Motor neuron (in vitro differentiated cells): ENCODE measurements at regions of chr6 and their contacts with region 1.

Region 1: GRCh38 chr6:89432875-89433251 is at the start of gene ANKRD6:
- ATAC-seq: peak; percentile 87 to 97 (median 89)
- H3K4me3 ChIP-seq: peak within 1 kb of the TSS; percentile 79 to 98 (median 85)
- H3K27ac ChIP-seq: peak within 1 kb of the TSS in 1 of 2 donors; percentile 6
- H3K4me1 ChIP-seq: peaks cover 31 to 32% of the 10 kb centered on the region in 2 donors
- total RNA-seq, gene ANKRD6: 2.6 to 52.4 (median 33.7) TPM

Region 2: DNA sequence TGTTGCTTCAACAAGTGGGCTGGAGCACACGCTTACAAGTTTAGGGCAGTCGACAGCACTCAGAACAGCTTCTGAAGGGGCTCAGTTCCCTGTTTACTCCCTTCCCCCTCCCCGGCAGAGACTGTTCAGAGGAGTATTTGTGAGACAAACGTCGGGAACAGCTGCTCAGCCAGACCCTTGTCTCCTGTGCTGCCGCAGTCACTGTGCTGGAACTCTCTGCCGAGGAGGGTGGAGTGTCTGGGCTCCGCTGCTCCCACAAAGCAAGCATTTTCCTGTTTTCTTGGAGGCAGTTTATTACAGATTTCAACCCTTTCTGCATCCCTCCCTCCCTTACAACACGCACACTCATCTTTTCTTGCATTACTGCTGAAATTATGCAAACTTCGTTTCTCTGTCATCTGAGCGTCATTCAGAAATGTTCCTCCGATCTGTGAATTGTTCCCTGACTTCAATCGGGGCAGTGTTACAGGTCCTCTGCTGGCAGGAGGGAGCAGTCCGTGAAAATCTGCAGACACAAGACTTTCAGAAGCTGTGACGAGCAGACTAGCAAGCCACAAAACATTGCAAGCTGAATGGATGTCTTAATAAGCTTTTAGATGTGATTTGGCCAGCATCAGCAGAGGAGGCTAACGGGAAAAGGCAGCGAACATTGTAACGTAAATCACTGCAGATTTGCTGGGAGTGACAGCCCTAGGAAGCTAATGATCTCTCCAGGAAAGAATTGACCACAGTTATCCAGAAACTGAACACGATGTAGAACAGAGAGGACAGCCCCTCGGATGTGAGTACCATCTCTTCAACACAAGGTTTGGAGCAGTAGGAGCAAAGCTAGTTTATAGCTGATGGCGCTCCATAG is 129.5 kb after region 1 on chr6:
- in situ Hi-C with region 1: loop called in 2 of 9 experiments (anchors 25 kb)
- ATAC-seq: peak; percentile 59 to 82 (median 73)
- H3K4me3 ChIP-seq: peak overlapping the region; percentile 19 to 39 (median 34)
- H3K27ac ChIP-seq: peak overlapping the region; percentile 52 to 71
- H3K4me1 ChIP-seq: peaks cover 62 to 64% of the 10 kb centered on the region in 2 donors

Region 3: GRCh38 chr6:89597988-89598692 is 165.3 kb after region 1 on chr6:
- in situ Hi-C with region 1: loop called in 5 of 9 experiments (anchors 10 to 25 kb)
- ATAC-seq: peak; percentile 84 to 99 (median 97)
- H3K4me3 ChIP-seq: peak overlapping the region in 3 of 5 donors; percentile 16 to 35 (median 34)
- H3K27ac ChIP-seq: peak overlapping the region in 1 of 2 donors; percentile 32
- H3K4me1 ChIP-seq: peaks cover 5 to 12% of the 10 kb centered on the region in 2 donors

Region 4: DNA sequence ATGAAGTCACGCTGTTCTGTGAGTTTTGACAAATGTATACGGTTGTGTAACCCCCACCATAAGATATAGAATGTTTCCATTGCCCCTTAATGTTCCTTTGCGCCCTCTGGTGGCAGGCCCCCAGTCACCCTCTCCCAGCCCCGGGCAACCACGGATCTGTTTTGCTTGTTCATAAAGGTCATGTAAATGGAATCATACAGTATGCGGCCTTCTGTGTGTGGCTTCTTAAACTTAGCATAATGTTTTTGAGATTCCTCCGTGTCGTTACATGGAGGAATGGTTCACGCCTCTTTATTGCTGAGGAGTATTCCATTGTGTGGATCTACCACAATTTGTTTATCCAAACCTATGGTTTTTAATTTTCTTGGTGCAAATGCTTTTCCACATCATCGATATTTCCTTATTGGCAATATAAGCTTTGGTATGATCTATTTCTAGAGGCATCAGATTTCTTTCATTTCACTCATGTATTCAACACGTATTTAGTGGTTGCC is 177.3 kb after region 1 on chr6:
- in situ Hi-C with region 1: loop called in 3 of 9 experiments (anchors 25 kb)
- ATAC-seq: peak in 6 of 8 experiments; percentile 26 to 96 (median 62)
- H3K4me3 ChIP-seq: no peak overlapping the region
- H3K27ac ChIP-seq: no peak overlapping the region
- H3K4me1 ChIP-seq: no peaks in the 10 kb centered on the region

Region 5: DNA sequence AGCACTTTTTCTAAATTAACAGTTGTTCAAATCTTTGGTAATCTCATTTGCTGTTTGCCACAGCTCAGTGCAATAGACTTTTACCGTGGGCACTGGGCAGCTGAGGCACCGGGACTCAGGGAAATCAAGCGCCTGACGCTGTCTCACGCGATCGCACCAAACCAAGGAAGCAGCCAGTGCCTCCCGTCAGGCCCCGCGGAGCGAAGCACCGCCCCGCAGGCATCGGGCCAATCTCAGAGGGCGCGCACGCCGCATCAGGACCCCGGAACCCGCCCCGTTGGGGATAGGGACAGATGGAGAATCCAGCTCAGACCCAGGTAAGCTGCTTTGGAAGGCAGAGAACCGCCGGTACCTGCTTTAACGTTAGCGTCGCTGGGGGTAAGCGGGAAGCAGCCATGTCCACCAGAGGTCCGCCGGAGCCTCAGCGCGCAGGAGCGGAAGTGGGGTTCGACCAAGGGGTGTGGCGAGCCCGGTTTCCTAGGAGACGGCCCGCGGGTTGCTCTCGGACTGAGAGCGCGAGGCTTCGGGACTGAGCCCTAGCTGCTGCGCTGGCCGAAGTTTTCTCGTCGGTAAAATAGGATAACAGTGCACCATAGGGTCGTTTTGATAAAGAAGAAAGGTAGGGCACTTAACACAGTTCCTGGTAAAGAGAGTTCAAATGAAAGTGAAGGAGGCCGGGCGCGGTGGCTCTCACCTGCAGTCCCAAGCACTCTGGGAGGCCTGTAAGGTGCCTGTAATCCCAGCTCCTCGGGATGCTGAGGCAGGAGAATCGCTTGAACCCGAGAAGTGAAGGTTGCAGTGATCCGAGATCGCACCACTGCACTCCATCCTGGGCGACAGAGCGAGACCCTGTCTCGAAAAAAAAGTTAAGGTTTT is 205.7 kb after region 1 on chr6 and contains the start of gene LYRM2:
- in situ Hi-C with region 1: loop called in 1 of 9 experiments (anchors 25 kb)
- ATAC-seq: peak; percentile 95 to 99 (median 96)
- H3K4me3 ChIP-seq: peak within 1 kb of the TSS; percentile 60 to 99 (median 88)
- H3K27ac ChIP-seq: peak within 1 kb of the TSS; percentile 88 to 93
- H3K4me1 ChIP-seq: peaks cover 17 to 23% of the 10 kb centered on the region in 2 donors
- total RNA-seq, gene LYRM2: 24.1 to 60.4 (median 32.1) TPM